B cell (primary cell): ENCODE measurements at regions of chr1 and their contacts with region 1.

Region 1: GRCh38 chr1:228102791-228103620 is at the start of gene C1orf35:
- DNase-seq: peak; percentile 94
- ATAC-seq: peak; percentile 83
- H3K4me3 ChIP-seq: peak within 1 kb of the TSS; percentile 48 to 98 (median 89)
- H3K4me3 Mint-ChIP-seq: peak within 1 kb of the TSS; percentile 99
- H3K27ac ChIP-seq: peak within 1 kb of the TSS; percentile 82
- H3K27ac Mint-ChIP-seq: peak within 1 kb of the TSS; percentile 98
- H3K4me1 ChIP-seq: peaks cover 18 to 28% of the 10 kb centered on the region in 2 donors
- H3K4me1 Mint-ChIP-seq: peaks cover 29% of the 10 kb centered on the region
- H3K27me3 ChIP-seq: no peaks in the 10 kb centered on the region
- H3K27me3 Mint-ChIP-seq: no peaks in the 10 kb centered on the region
- CTCF ChIP-seq: no peak
- total RNA-seq, gene C1orf35: 23.9 and 24.1 TPM in 2 replicates

Region 2: DNA sequence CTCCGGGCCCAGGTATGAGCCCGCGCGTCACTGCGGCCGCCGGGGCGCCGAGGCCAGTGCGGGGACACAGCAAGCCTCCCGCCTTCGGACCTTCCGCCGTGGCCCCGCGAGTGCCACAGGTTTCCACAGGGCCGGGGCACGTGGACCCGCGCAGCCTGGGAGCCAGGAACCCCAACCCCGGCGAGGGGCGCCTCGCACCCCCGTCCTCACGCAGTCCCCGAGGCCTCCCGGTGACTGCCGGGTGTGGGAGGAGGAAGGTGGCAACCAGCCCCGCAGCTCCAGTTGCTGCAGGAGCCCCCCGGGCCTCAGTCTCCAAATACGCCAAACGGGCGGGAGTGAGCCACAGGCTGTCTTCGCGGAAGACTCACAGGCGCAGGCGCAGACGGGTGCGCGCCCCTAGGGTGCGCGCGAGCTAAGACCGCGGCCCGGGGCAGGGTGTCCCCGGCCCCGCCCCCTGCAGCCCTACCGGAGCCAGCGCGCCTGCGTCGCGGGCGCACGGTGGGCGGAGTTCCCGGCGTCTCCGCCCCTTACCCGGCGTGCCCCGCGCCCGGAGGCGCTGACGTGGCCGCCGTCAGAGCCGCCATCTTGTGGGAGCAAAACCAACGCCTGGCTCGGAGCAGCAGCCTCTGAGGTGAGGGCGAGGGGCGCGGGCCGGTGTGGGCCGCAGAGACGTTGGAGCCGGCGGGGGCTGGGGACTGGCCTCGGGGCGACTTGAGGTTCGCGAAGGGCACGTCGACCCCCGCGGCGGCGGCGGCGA is 20.7 kb before region 1 on chr1 and contains the start of gene ARF1:
- CTCF ChIA-PET with region 1: no interaction called
- POLR2A ChIA-PET with region 1: interaction called, 5 read pairs
- intact Hi-C with region 1: loop called (anchors 1 kb)
- DNase-seq: peak; percentile 96
- ATAC-seq: peak; percentile 92
- H3K4me3 ChIP-seq: peak within 1 kb of the TSS; percentile 78 to 97 (median 91)
- H3K4me3 Mint-ChIP-seq: peak within 1 kb of the TSS; percentile 94
- H3K27ac ChIP-seq: peak within 1 kb of the TSS; percentile 78 to 96
- H3K27ac Mint-ChIP-seq: peak within 1 kb of the TSS; percentile 93
- H3K4me1 ChIP-seq: peaks cover 44 to 50% of the 10 kb centered on the region in 2 donors
- H3K4me1 Mint-ChIP-seq: peaks cover 46% of the 10 kb centered on the region
- H3K27me3 ChIP-seq: no peaks in the 10 kb centered on the region
- H3K27me3 Mint-ChIP-seq: no peaks in the 10 kb centered on the region
- CTCF ChIP-seq: no peak
- total RNA-seq, gene ARF1: 193 and 195 TPM in 2 replicates

Region 3: DNA sequence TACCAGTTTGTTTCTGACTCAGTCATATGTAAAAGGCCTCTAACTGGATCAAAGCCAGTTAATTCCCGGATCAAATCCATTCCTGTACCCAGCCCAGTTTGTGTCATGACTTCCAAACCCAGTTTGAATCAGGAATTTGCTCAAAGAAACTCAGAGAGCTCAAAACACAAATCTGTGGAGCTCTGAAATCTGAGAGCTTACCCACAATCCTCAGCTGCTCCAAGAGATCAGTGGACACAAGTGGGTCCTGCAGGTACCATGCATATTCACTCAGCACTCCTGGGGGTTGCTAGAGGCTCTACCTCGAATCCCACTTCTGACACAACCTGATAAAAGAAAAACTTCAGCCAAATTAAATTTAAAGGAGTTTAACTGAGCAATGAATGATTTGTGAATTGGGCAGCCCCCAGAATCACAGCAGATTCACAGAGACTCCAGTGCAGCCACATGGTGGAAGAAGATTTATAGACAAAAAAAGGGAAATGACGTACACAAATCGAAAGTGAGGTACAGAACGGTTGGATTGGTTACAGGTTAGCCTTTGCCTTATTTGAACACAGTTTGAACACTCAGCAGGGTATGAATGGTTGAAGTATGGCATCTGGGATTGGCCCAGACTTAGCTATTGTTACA is 18.0 kb after region 1 on chr1:
- CTCF ChIA-PET with region 1: no interaction called
- POLR2A ChIA-PET with region 1: no interaction called
- intact Hi-C with region 1: no loop called
- DNase-seq: peak; percentile 63
- ATAC-seq: peak; percentile 60
- H3K4me3 ChIP-seq: no peak overlapping the region
- H3K4me3 Mint-ChIP-seq: peak overlapping the region; percentile 8
- H3K27ac ChIP-seq: no peak overlapping the region
- H3K27ac Mint-ChIP-seq: no peak overlapping the region
- H3K4me1 ChIP-seq: peaks cover 10 to 11% of the 10 kb centered on the region in 2 donors
- H3K4me1 Mint-ChIP-seq: peaks cover 5% of the 10 kb centered on the region
- H3K27me3 ChIP-seq: no peaks in the 10 kb centered on the region
- H3K27me3 Mint-ChIP-seq: no peaks in the 10 kb centered on the region
- CTCF ChIP-seq: no peak

Region 4: GRCh38 chr1:228165372-228166169 is 62.6 kb after region 1 on chr1 and contains the start of gene IBA57:
- CTCF ChIA-PET with region 1: interaction called, 4 read pairs
- POLR2A ChIA-PET with region 1: interaction called, 3 read pairs
- intact Hi-C with region 1: loop called (anchors 1 kb)
- DNase-seq: peak; percentile 100
- ATAC-seq: peak; percentile 84
- H3K4me3 ChIP-seq: peak within 1 kb of the TSS; percentile 64 to 88 (median 74)
- H3K4me3 Mint-ChIP-seq: peak within 1 kb of the TSS; percentile 93
- H3K27ac ChIP-seq: peak within 1 kb of the TSS; percentile 95 to 98
- H3K27ac Mint-ChIP-seq: peak within 1 kb of the TSS; percentile 99
- H3K4me1 ChIP-seq: peaks cover 14 to 26% of the 10 kb centered on the region in 2 donors
- H3K4me1 Mint-ChIP-seq: peaks cover 28% of the 10 kb centered on the region
- H3K27me3 ChIP-seq: peaks cover 0 to 5% (median 0%) of the 10 kb centered on the region in 4 experiments
- H3K27me3 Mint-ChIP-seq: no peaks in the 10 kb centered on the region
- CTCF ChIP-seq: peak; percentile 73
- total RNA-seq, gene IBA57: 12.8 and 15.3 TPM in 2 replicates